CD8-positive, alpha-beta T cell (primary cell): ENCODE measurements at regions of chr11 and their contacts with region 1.

Region 1: GRCh38 chr11:10413268-10413667 is 41.8 kb upstream of the AMPD3 start:
- DNase-seq: peak in 8 of 9 experiments; percentile 20 to 81 (median 53)
- ATAC-seq: peak; percentile 93
- H3K4me3 ChIP-seq: no peak overlapping the region
- H3K4me3 Mint-ChIP-seq: no peak overlapping the region
- H3K27ac ChIP-seq: no peak overlapping the region
- H3K27ac Mint-ChIP-seq: no peak overlapping the region
- H3K4me1 ChIP-seq: peaks cover 29% of the 10 kb centered on the region
- H3K4me1 Mint-ChIP-seq: peaks cover 40% of the 10 kb centered on the region
- H3K27me3 ChIP-seq: no peaks in the 10 kb centered on the region
- H3K27me3 Mint-ChIP-seq: no peaks in the 10 kb centered on the region
- CTCF ChIP-seq: peak; percentile 51

Region 2: GRCh38 chr11:8584511-8584910 is 1828.8 kb before region 1 on chr11:
- CTCF ChIA-PET with region 1: no interaction called
- POLR2A ChIA-PET with region 1: no interaction called
- intact Hi-C with region 1: no loop called
- DNase-seq: no peak
- ATAC-seq: no peak
- H3K4me3 ChIP-seq: no peak overlapping the region
- H3K4me3 Mint-ChIP-seq: no peak overlapping the region
- H3K27ac ChIP-seq: no peak overlapping the region
- H3K27ac Mint-ChIP-seq: no peak overlapping the region
- H3K4me1 ChIP-seq: no peaks in the 10 kb centered on the region
- H3K4me1 Mint-ChIP-seq: no peaks in the 10 kb centered on the region
- H3K27me3 ChIP-seq: no peaks in the 10 kb centered on the region
- H3K27me3 Mint-ChIP-seq: peaks cover 10% of the 10 kb centered on the region
- CTCF ChIP-seq: no peak

Region 3: DNA sequence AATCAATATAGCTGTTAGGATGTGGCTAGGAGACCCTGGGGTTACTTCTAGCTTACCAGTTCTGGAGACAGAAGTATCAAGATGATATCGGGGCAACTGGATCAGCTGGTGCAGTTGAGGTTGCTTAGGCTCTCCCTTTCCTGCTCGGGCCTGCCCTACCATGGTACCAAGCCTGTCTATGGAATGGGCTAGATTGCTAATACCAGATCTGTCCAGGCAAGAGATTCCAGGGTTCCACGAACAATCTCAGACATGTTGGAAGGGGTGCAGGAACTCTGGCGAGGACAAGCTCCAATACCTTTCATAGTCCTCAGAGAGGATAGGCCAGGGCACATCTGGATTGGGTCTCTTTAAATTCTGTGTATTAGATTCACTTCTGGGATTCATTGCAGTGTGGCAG is 54.6 kb before region 1 on chr11:
- CTCF ChIA-PET with region 1: no interaction called
- POLR2A ChIA-PET with region 1: no interaction called
- intact Hi-C with region 1: no loop called
- DNase-seq: no peak
- ATAC-seq: no peak
- H3K4me3 ChIP-seq: no peak overlapping the region
- H3K4me3 Mint-ChIP-seq: no peak overlapping the region
- H3K27ac ChIP-seq: no peak overlapping the region
- H3K27ac Mint-ChIP-seq: no peak overlapping the region
- H3K4me1 ChIP-seq: no peaks in the 10 kb centered on the region
- H3K4me1 Mint-ChIP-seq: no peaks in the 10 kb centered on the region
- H3K27me3 ChIP-seq: peaks cover 3 to 4% of the 10 kb centered on the region in 2 experiments
- H3K27me3 Mint-ChIP-seq: peaks cover 23% of the 10 kb centered on the region
- CTCF ChIP-seq: no peak

Region 4: GRCh38 chr11:10426475-10426874 is 13.2 kb after region 1 on chr11:
- CTCF ChIA-PET with region 1: interaction called, 37 read pairs
- POLR2A ChIA-PET with region 1: no interaction called
- intact Hi-C with region 1: no loop called
- DNase-seq: no peak
- ATAC-seq: no peak
- H3K4me3 ChIP-seq: no peak overlapping the region
- H3K4me3 Mint-ChIP-seq: no peak overlapping the region
- H3K27ac ChIP-seq: no peak overlapping the region
- H3K27ac Mint-ChIP-seq: no peak overlapping the region
- H3K4me1 ChIP-seq: no peaks in the 10 kb centered on the region
- H3K4me1 Mint-ChIP-seq: no peaks in the 10 kb centered on the region
- H3K27me3 ChIP-seq: no peaks in the 10 kb centered on the region
- H3K27me3 Mint-ChIP-seq: no peaks in the 10 kb centered on the region
- CTCF ChIP-seq: no peak

Region 5: DNA sequence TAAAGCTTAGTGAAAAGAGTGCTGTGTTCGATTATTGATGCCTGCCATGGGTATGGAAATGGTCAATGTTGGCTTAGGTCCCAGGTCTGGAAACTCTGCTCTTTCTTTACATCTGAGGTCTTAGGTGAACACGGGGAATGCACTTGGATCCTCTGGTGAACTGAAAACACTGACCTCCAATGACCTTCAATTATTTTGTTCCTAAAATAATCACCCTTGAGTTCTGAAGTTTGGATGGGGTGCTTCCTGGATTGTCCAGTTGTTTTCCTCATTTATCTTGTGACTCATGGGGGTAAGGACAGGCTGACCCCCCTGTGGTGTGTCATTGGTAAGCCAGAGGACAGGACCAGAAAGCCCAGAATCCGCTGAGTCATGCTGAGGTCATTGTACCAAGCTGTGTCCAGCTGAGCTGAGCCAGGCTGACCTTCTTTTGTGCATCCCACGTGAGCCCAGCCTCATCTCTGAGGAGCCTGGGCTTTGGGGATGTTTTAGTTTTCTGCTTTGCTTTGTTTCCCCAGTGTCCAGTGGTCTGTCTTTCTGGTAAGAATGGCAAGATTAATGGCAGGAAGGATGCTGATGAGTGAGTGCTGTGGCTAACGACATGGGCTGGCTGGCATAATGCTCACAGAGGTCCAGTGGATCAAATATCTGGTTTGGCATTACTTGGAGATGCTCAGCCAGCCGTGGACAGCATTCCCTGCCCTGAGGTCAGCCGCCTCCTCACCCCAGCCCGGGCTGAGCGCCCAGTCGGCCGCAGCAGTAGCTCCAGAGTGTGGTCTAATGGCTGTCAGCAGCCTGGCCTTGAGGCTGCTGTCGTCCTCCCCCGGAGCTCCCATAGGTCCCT is 77.4 kb after region 1 on chr11:
- CTCF ChIA-PET with region 1: interaction called, 11 read pairs
- POLR2A ChIA-PET with region 1: no interaction called
- intact Hi-C with region 1: loop called in 1 of 2 experiments (anchors 5 kb)
- DNase-seq: no peak
- ATAC-seq: no peak
- H3K4me3 ChIP-seq: no peak overlapping the region
- H3K4me3 Mint-ChIP-seq: no peak overlapping the region
- H3K27ac ChIP-seq: no peak overlapping the region
- H3K27ac Mint-ChIP-seq: peak overlapping the region; percentile 78
- H3K4me1 ChIP-seq: no peaks in the 10 kb centered on the region
- H3K4me1 Mint-ChIP-seq: peaks cover 9% of the 10 kb centered on the region
- H3K27me3 ChIP-seq: no peaks in the 10 kb centered on the region
- H3K27me3 Mint-ChIP-seq: no peaks in the 10 kb centered on the region
- CTCF ChIP-seq: no peak

Region 6: GRCh38 chr11:10581481-10582019 is 168.3 kb after region 1 on chr11:
- CTCF ChIA-PET with region 1: no interaction called
- POLR2A ChIA-PET with region 1: no interaction called
- intact Hi-C with region 1: no loop called
- DNase-seq: peak in 1 of 9 experiments; percentile 31
- ATAC-seq: no peak
- H3K4me3 ChIP-seq: no peak overlapping the region
- H3K4me3 Mint-ChIP-seq: no peak overlapping the region
- H3K27ac ChIP-seq: no peak overlapping the region
- H3K27ac Mint-ChIP-seq: no peak overlapping the region
- H3K4me1 ChIP-seq: no peaks in the 10 kb centered on the region
- H3K4me1 Mint-ChIP-seq: no peaks in the 10 kb centered on the region
- H3K27me3 ChIP-seq: no peaks in the 10 kb centered on the region
- H3K27me3 Mint-ChIP-seq: peaks cover 10% of the 10 kb centered on the region
- CTCF ChIP-seq: no peak

Region 7: GRCh38 chr11:10653926-10654810 is 240.9 kb after region 1 on chr11:
- CTCF ChIA-PET with region 1: interaction called, 151 read pairs
- POLR2A ChIA-PET with region 1: interaction called, 5 read pairs
- intact Hi-C with region 1: loop called (anchors 1 kb)
- DNase-seq: peak in 7 of 9 experiments; percentile 17 to 75 (median 35)
- ATAC-seq: peak; percentile 71
- H3K4me3 ChIP-seq: no peak overlapping the region
- H3K4me3 Mint-ChIP-seq: no peak overlapping the region
- H3K27ac ChIP-seq: no peak overlapping the region
- H3K27ac Mint-ChIP-seq: no peak overlapping the region
- H3K4me1 ChIP-seq: no peaks in the 10 kb centered on the region
- H3K4me1 Mint-ChIP-seq: no peaks in the 10 kb centered on the region
- H3K27me3 ChIP-seq: no peaks in the 10 kb centered on the region
- H3K27me3 Mint-ChIP-seq: no peaks in the 10 kb centered on the region
- CTCF ChIP-seq: peak; percentile 69

Region 8: DNA sequence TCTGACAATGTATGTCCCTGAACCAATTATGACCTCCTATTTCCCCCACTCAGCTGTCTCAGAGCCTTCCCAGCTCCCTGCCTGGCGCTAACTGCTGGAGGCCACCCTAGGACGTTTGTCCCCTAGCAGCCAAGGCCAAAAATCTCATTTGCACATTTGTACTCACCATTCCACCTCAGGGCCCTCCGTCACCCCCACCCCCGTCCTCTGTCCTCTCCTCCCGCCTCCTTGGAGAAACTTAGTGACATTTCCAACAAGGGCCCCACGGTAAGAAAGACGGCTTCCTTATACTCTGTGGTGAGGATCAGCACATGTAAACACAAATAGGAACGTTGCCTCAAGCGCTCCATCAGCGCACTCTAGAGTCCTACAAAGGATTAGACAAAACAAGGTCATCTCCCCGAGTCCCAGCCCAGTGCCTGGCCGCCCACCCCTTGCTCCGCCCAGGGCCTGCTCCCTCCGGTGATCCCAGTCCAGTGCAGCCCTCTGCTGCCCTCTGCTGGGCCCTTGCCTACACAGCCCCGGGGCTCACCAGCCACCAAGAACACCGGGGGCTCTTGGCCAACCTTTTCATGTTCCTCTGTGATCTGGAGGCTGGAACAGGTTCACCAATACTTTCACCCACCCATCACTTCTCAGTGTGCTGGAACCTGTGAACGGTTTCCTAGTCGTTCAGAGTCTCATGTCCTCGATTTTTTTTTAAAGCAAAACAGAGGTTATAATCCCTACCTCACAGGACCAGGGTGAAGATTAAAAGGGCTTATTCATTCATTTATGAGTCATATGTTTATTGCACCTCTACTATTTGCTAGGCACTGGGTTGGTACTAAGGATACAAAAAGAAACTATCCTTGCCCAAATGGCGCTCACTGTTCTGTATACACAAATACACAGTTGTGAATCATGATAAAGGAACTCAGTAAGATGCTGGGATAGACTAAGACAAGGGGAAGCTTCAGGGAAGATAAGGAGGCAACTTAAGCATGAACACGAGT is 322.5 kb after region 1 on chr11:
- CTCF ChIA-PET with region 1: interaction called, 25 read pairs
- POLR2A ChIA-PET with region 1: no interaction called
- intact Hi-C with region 1: loop called in 1 of 2 experiments (anchors 1 kb)
- DNase-seq: peak; percentile 73 to 91 (median 85)
- ATAC-seq: peak; percentile 99
- H3K4me3 ChIP-seq: peak overlapping the region; percentile 3 to 20
- H3K4me3 Mint-ChIP-seq: peak overlapping the region; percentile 56
- H3K27ac ChIP-seq: no peak overlapping the region
- H3K27ac Mint-ChIP-seq: no peak overlapping the region
- H3K4me1 ChIP-seq: peaks cover 9% of the 10 kb centered on the region
- H3K4me1 Mint-ChIP-seq: peaks cover 13% of the 10 kb centered on the region
- H3K27me3 ChIP-seq: no peaks in the 10 kb centered on the region
- H3K27me3 Mint-ChIP-seq: no peaks in the 10 kb centered on the region
- CTCF ChIP-seq: peak; percentile 96